ENCODE measurements at regions of chr14 and their contacts with region 1.

Region 1: DNA sequence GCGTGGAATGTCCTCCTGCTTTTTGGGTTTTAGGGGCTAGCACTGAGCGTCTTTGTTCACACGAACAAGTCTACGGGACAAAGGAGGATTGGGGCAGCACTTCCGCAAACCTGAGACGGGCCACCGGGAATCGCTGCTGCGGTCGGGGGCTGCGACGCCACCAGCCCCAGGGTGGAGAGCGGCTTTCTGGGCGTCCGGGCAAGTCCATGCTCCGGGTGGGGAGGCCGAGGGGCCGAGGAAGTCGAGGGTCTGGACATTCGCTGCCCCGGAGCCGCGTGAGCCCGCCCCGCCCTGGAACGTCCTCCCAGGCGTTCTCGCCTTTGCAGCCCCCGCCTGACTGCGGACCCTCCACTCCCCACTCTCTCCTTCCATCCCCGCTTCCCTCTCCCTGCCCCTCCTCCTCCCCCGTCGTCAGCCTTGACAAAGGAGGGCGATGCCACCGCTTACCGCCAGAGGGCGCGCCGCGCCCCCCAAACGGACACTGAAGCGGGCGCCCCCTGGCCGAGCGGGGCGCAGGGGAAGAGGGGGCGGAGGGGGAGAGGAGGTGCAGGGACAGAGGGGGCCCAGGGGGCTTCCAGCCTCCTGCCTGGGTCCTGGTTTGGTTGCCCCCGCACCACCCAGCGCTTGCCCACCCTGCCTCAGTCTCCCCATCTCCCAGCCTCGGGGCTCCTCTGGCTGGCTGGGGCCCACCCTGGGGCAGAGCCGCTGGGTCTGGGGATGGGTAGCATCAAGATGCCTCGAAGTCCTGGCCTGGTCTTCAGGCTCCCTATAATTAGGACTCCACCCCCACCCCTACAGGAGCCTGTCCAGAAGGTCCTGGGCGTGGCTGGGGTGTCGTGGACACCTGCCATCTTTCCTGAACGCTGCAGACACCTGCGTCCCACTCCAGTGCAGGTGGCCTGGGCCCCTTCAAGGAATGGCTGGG is 39.1 kb upstream of the INF2 start:
- DNase-seq: peak; percentile 80
- H3K4me3 ChIP-seq: peak overlapping the region; percentile 50
- H3K27ac ChIP-seq: no peak overlapping the region
- H3K4me1 ChIP-seq: no peaks in the 10 kb centered on the region
- H3K27me3 ChIP-seq: no peaks in the 10 kb centered on the region
- CTCF ChIP-seq: peak; percentile 99

Region 2: GRCh38 chr14:104665657-104666522 is 15.6 kb after region 1 on chr14:
- CTCF ChIA-PET with region 1: no interaction called
- POLR2A ChIA-PET with region 1: no interaction called
- intact Hi-C with region 1: no loop called
- DNase-seq: no peak
- H3K4me3 ChIP-seq: no peak overlapping the region
- H3K27ac ChIP-seq: peak overlapping the region; percentile 6
- H3K4me1 ChIP-seq: peaks cover 7% of the 10 kb centered on the region
- H3K27me3 ChIP-seq: no peaks in the 10 kb centered on the region
- CTCF ChIP-seq: peak; percentile 47

Region 3: DNA sequence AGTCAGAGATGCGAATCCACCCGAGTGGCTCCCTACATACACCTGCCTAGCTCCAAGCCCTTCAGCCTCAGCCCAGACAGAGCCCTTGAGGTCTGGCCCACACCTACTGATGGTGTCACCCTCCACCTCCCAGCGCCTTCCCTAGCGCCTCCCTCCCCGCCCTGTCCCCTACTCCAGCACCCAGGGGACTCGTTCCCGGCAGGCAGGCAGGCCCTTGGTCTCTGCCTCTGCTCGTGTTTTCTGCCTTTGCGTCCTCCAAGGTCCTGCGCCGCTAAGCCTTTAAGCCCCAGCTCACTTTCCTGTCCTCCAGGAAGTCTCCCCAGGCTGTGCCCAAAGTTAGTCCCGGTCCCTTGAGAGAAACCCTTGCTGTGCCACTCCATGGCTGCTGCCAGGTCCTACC is 51.8 kb after region 1 on chr14:
- CTCF ChIA-PET with region 1: interaction called, 12 read pairs
- POLR2A ChIA-PET with region 1: no interaction called
- intact Hi-C with region 1: no loop called
- DNase-seq: no peak
- H3K4me3 ChIP-seq: no peak overlapping the region
- H3K27ac ChIP-seq: no peak overlapping the region
- H3K4me1 ChIP-seq: peaks cover 3% of the 10 kb centered on the region
- H3K27me3 ChIP-seq: no peaks in the 10 kb centered on the region
- CTCF ChIP-seq: no peak

Region 4: DNA sequence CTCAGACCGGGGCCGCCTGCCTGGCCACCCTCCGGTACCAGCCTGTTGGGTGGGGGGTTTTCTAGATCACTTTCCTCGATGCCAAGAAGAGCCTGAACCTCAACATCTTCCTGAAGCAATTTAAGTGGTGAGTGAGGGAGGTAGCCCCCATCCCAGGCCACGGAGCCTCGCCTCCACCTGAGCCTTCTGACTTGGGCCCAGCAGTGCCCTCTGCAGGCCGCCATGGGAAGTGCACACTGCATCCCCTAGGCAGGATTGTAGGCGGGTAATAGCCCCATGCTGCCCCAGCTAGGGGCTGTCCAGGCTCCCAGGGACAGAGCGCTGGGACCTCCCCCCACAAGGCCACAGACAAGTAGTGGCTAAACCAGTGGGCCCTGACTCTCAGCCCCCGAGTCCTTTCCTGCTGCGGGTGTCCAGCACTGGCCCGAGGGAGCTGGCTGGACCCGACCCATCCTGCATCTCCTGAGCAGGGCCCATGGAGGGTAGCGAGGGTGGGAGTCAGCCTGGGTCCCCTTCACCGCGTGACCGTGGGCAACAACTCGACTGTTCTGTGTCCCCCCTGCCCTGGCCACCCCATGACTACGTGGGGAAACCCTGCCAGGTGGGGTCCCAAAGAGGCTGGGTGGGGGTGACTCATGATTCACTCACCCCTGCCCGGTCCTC is 58.4 kb after region 1 on chr14:
- CTCF ChIA-PET with region 1: no interaction called
- POLR2A ChIA-PET with region 1: no interaction called
- intact Hi-C with region 1: loop called (anchors 1 kb)
- DNase-seq: peak; percentile 81
- H3K4me3 ChIP-seq: no peak overlapping the region
- H3K27ac ChIP-seq: no peak overlapping the region
- H3K4me1 ChIP-seq: no peaks in the 10 kb centered on the region
- H3K27me3 ChIP-seq: no peaks in the 10 kb centered on the region
- CTCF ChIP-seq: peak; percentile 97

Region 5: GRCh38 chr14:105267820-105268548 is 617.7 kb after region 1 on chr14:
- CTCF ChIA-PET with region 1: no interaction called
- POLR2A ChIA-PET with region 1: no interaction called
- intact Hi-C with region 1: no loop called
- DNase-seq: no peak
- H3K4me3 ChIP-seq: no peak overlapping the region
- H3K27ac ChIP-seq: no peak overlapping the region
- H3K4me1 ChIP-seq: no peaks in the 10 kb centered on the region
- H3K27me3 ChIP-seq: no peaks in the 10 kb centered on the region
- CTCF ChIP-seq: no peak

Measured in A673 (cell line).